BJ (cell line): ENCODE measurements at regions of chr9 and their contacts with region 1.

Region 1: GRCh38 chr9:84504360-84504759 is 163.8 kb upstream of the SLC28A3 start:
- DNase-seq: no peak
- H3K4me3 ChIP-seq: no peak overlapping the region
- H3K27me3 ChIP-seq: no peaks in the 10 kb centered on the region
- CTCF ChIP-seq: no peak

Region 2: DNA sequence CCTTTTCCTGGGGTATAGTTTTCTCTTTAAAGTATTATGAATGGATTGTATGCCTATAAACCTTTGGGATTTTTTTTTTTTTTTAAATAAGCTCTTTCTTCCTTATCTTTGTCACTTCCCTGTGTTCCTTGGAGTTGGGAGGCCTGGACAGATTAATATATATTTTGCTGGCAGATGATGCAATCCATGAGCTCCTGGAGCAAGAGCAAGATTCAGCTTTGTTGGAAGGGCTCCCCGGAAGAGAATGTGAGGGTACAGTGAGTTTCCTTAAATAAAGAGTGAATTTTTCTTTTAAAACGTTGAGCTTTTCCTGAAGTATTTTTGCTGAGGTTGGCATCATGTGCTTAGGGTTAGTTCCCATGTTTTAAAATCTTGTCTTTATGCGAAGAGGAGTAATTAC is 65.1 kb before region 1 on chr9:
- CTCF ChIA-PET with region 1: no interaction called
- POLR2A ChIA-PET with region 1: interaction called, 17 read pairs
- DNase-seq: no peak
- H3K4me3 ChIP-seq: no peak overlapping the region
- H3K27me3 ChIP-seq: no peaks in the 10 kb centered on the region
- CTCF ChIP-seq: no peak

Region 3: DNA sequence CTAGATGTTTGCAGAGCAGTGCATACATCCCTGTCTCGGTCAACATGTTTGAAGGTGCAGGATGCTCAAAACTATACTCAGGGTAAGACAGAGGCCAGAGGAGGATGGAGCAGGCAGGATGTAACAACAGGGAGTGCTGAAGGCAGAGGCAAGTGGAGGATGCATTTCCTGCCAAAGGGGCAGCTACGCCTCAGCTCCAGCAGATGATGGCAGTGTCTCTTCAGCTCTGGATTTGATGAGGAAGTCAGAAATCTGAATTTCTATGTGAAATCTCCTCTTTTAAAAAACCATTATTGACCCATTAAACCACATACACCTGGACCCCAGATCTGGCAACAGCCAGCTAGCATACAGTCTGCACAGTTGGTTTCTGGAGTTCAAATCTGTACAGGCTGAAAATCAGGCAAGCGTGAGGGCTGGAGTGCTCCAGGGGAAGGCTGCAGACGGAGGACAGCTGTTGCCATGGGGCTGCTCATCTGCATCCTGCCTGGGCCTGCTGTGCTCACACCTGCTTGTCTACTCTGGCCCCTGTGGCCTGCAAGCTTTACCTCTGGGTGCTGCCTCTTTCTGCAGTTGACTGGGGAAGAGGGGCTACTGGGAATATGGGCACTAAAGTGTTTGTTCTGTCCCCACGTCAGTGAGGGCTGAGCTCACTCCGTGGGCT is 10.9 kb before region 1 on chr9:
- CTCF ChIA-PET with region 1: no interaction called
- POLR2A ChIA-PET with region 1: no interaction called
- DNase-seq: no peak
- H3K4me3 ChIP-seq: no peak overlapping the region
- H3K27me3 ChIP-seq: no peaks in the 10 kb centered on the region
- CTCF ChIP-seq: no peak